ENCODE measurements at regions of chr11 and their contacts with region 1.

Region 1: DNA sequence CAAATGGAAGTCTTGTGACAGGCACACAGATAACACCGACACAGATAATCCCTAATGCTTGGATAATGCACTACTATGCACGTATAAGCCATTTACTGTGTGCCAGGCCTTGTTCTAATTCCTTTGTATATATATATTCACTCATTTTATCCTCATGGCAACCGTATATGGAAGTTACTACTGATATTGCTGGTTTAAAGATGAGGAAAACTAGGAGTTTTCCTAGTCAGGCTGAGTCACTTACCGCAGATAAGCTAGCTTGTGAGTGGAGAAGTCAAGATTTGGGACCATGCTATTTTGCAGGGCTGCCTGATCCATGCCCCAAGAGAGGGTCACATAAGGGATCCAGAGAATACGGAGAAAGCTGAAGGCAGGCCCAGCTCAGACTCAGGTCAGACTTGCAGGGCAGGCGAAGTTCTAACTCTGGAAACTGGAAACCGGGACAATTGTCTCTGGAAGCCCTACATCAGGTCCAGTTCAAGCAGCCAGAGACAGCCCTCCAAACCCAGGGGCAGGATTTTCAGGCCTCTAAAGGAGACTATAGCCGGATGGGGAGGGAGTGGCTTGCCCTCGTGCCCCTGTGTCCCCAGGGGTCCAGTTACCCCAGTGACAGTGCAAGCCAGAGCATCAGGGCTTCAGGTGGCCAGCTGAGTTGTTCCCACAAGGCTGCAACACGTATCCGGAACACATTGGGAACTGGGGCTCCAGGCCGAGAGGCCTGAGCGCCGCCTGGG is 534.8 kb downstream of the INSC start:
- DNase-seq: no peak
- H3K4me3 ChIP-seq: no peak overlapping the region
- H3K27ac ChIP-seq: peak overlapping the region; percentile 30 to 81 (median 69)
- H3K4me1 ChIP-seq: peaks cover 8 to 16% (median 12%) of the 10 kb centered on the region in 4 donors
- H3K27me3 ChIP-seq: peaks cover 5% of the 10 kb centered on the region
- CTCF ChIP-seq: no peak
- EP300 ChIP-seq: no peak
- POLR2A ChIP-seq: no peak

Region 2: GRCh38 chr11:15944460-15944859 is 294.9 kb after region 1 on chr11:
- in situ Hi-C with region 1: no loop called
- intact Hi-C with region 1: no loop called
- DNase-seq: peak; percentile 48
- H3K4me3 ChIP-seq: no peak overlapping the region
- H3K27ac ChIP-seq: no peak overlapping the region
- H3K4me1 ChIP-seq: peaks cover 0 to 11% (median 0%) of the 10 kb centered on the region in 4 donors
- H3K27me3 ChIP-seq: no peaks in the 10 kb centered on the region
- CTCF ChIP-seq: no peak
- EP300 ChIP-seq: no peak
- POLR2A ChIP-seq: no peak

Region 3: DNA sequence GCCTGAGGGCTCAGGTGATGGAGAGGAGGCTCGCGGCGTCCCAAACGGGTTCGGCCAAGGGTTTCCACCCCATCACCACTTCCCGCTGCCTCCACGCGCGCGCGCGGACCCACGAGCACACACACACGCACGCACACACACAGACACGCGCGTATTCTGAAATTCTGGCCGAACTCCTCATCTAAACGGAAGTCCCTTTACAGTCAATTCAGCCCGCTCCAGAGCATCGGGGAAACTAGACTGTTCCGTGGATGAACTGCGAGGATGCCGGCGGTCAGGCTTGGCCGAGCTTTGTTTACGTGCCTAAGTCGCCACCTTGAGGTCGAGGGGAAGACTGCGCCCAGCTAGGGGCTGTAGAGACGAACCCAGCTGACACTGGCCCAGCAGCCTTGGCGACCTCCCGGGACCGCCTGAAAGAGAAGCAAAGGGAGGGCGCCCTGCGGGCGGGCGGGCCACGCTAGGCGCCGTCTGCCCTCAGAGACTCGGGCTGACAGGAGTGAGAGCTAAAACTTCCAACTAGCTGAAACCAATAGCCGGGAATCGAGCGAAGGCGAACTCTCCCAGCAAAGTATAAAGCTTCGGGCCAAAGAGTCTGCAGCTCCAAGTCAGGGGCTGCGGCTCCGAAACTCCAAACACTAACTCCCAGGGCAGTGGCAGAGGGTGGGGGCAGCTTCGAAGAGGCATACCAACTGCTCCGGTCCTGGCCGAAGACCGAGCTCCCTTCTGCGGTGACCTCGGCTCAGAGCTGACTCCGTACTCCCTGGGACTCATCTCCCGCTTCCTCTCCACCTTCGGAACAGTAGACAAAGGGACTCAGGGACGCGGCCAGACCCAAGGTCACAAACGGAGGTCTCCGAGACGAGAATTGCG is 964.2 kb after region 1 on chr11:
- in situ Hi-C with region 1: loop called (anchors 10 kb)
- intact Hi-C with region 1: loop called (anchors 5 kb)
- DNase-seq: peak; percentile 83
- H3K4me3 ChIP-seq: peak overlapping the region in 3 of 4 donors; percentile 32 to 51 (median 40)
- H3K27ac ChIP-seq: peak overlapping the region; percentile 4 to 37 (median 18)
- H3K4me1 ChIP-seq: peaks cover 0 to 18% (median 16%) of the 10 kb centered on the region in 4 donors
- H3K27me3 ChIP-seq: peaks cover 100% of the 10 kb centered on the region
- CTCF ChIP-seq: peak; percentile 78 to 90 (median 87)
- EP300 ChIP-seq: no peak
- POLR2A ChIP-seq: no peak

Region 4: GRCh38 chr11:17439316-17439782 is 1789.8 kb after region 1 on chr11:
- in situ Hi-C with region 1: no loop called
- intact Hi-C with region 1: no loop called
- DNase-seq: no peak
- H3K4me3 ChIP-seq: no peak overlapping the region
- H3K27ac ChIP-seq: no peak overlapping the region
- H3K4me1 ChIP-seq: no peaks in the 10 kb centered on the region
- H3K27me3 ChIP-seq: peaks cover 10% of the 10 kb centered on the region
- CTCF ChIP-seq: no peak
- EP300 ChIP-seq: no peak
- POLR2A ChIP-seq: no peak

Measured in transverse colon (tissue), 4 donors.